CD4-positive, alpha-beta memory T cell (primary cell): ENCODE measurements at regions of chr14 and their contacts with region 1.

Region 1: GRCh38 chr14:105414456-105415371 is 4.9 kb upstream of the MTA1 start:
- DNase-seq: peak; percentile 55 to 65 (median 61)
- H3K4me3 ChIP-seq: peak overlapping the region in 1 of 2 donors; percentile 51
- H3K4me3 Mint-ChIP-seq: peak overlapping the region; percentile 70 to 82 (median 78)
- H3K27ac ChIP-seq: no peak overlapping the region
- H3K27ac Mint-ChIP-seq: peak overlapping the region in 1 of 7 donors; percentile 42
- H3K4me1 ChIP-seq: peaks cover 25% of the 10 kb centered on the region
- H3K4me1 Mint-ChIP-seq: peaks cover 1 to 32% (median 13%) of the 10 kb centered on the region in 4 donors
- H3K27me3 ChIP-seq: peaks cover 27% of the 10 kb centered on the region
- H3K27me3 Mint-ChIP-seq: peaks cover 3 to 7% of the 10 kb centered on the region in 2 donors

Region 2: GRCh38 chr14:105398044-105398725 is 16.5 kb before region 1 on chr14 and contains the start of gene TEX22:
- CTCF ChIA-PET with region 1: interaction called, 9 read pairs
- POLR2A ChIA-PET with region 1: interaction called, 7 read pairs
- intact Hi-C with region 1: loop called (anchors 2 kb)
- DNase-seq: peak; percentile 79 to 86 (median 79)
- H3K4me3 ChIP-seq: peak within 1 kb of the TSS; percentile 57 to 74
- H3K4me3 Mint-ChIP-seq: peak within 1 kb of the TSS; percentile 77 to 85 (median 82)
- H3K27ac ChIP-seq: peak within 1 kb of the TSS; percentile 80
- H3K27ac Mint-ChIP-seq: peak within 1 kb of the TSS; percentile 58 to 90 (median 82)
- H3K4me1 ChIP-seq: peaks cover 18% of the 10 kb centered on the region
- H3K4me1 Mint-ChIP-seq: peaks cover 4 to 18% (median 10%) of the 10 kb centered on the region in 4 donors
- H3K27me3 ChIP-seq: no peaks in the 10 kb centered on the region
- H3K27me3 Mint-ChIP-seq: no peaks in the 10 kb centered on the region
- total RNA-seq, gene TEX22: 4.7 to 7.5 TPM